CD8-positive, alpha-beta T cell (primary cell): ENCODE measurements at regions of chr17 and their contacts with region 1.

Region 1: GRCh38 chr17:76523084-76524037 is 14.1 kb downstream of the CYGB start:
- DNase-seq: peak; percentile 64 to 93 (median 81)
- ATAC-seq: peak; percentile 79
- H3K4me3 ChIP-seq: no peak overlapping the region
- H3K4me3 Mint-ChIP-seq: peak overlapping the region; percentile 43
- H3K27ac ChIP-seq: no peak overlapping the region
- H3K27ac Mint-ChIP-seq: peak overlapping the region; percentile 84
- H3K4me1 ChIP-seq: peaks cover 23% of the 10 kb centered on the region
- H3K4me1 Mint-ChIP-seq: peaks cover 25% of the 10 kb centered on the region
- H3K27me3 ChIP-seq: no peaks in the 10 kb centered on the region
- H3K27me3 Mint-ChIP-seq: no peaks in the 10 kb centered on the region
- CTCF ChIP-seq: peak; percentile 99

Region 2: DNA sequence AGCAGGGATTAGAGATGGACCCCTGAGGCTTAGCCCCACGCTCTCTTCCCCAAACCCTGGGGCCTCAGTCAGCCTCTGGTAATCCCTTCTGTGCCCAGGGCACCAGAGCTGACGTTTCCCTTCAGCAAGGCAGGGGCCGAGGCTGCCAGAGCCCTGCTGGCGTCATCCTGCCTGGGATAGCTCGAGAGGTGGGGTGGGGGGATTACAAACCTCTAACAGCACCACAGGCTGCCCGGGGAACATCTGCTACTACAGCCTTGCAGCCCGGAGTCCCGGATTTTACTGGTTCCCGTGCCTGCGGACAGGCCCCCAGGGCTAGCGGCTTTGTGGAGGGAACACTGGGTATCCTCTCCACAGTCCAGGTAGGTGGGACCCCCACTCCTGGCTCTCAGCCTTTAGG is 56.0 kb before region 1 on chr17 and contains the start of gene AANAT:
- CTCF ChIA-PET with region 1: interaction called, 14 read pairs
- POLR2A ChIA-PET with region 1: interaction called, 3 read pairs
- intact Hi-C with region 1: no loop called
- DNase-seq: no peak
- ATAC-seq: no peak
- H3K4me3 ChIP-seq: no peak within 1 kb of the TSS
- H3K4me3 Mint-ChIP-seq: no peak within 1 kb of the TSS
- H3K27ac ChIP-seq: no peak within 1 kb of the TSS
- H3K27ac Mint-ChIP-seq: no peak within 1 kb of the TSS
- H3K4me1 ChIP-seq: peaks cover 3% of the 10 kb centered on the region
- H3K4me1 Mint-ChIP-seq: peaks cover 4% of the 10 kb centered on the region
- H3K27me3 ChIP-seq: no peaks in the 10 kb centered on the region
- H3K27me3 Mint-ChIP-seq: no peaks in the 10 kb centered on the region
- CTCF ChIP-seq: no peak
- total RNA-seq, gene AANAT: not detected

Region 3: GRCh38 chr17:76540381-76541300 is 17.3 kb after region 1 on chr17:
- CTCF ChIA-PET with region 1: interaction called, 176 read pairs
- POLR2A ChIA-PET with region 1: interaction called, 4 read pairs
- intact Hi-C with region 1: no loop called
- DNase-seq: peak in 1 of 9 experiments; percentile 52
- ATAC-seq: peak; percentile 40
- H3K4me3 ChIP-seq: no peak overlapping the region
- H3K4me3 Mint-ChIP-seq: no peak overlapping the region
- H3K27ac ChIP-seq: no peak overlapping the region
- H3K27ac Mint-ChIP-seq: no peak overlapping the region
- H3K4me1 ChIP-seq: peaks cover 17% of the 10 kb centered on the region
- H3K4me1 Mint-ChIP-seq: peaks cover 11% of the 10 kb centered on the region
- H3K27me3 ChIP-seq: peaks cover 3 to 13% of the 10 kb centered on the region in 2 experiments
- H3K27me3 Mint-ChIP-seq: peaks cover 29% of the 10 kb centered on the region
- CTCF ChIP-seq: no peak

Region 4: GRCh38 chr17:76557368-76558197 is 34.2 kb after region 1 on chr17:
- CTCF ChIA-PET with region 1: interaction called, 83 read pairs
- POLR2A ChIA-PET with region 1: interaction called, 5 read pairs
- intact Hi-C with region 1: loop called in 1 of 2 experiments (anchors 2 kb)
- DNase-seq: peak; percentile 86 to 97 (median 92)
- ATAC-seq: peak; percentile 78
- H3K4me3 ChIP-seq: peak overlapping the region; percentile 70 to 75
- H3K4me3 Mint-ChIP-seq: peak overlapping the region; percentile 95
- H3K27ac ChIP-seq: peak overlapping the region; percentile 81 to 95
- H3K27ac Mint-ChIP-seq: peak overlapping the region; percentile 97
- H3K4me1 ChIP-seq: peaks cover 49% of the 10 kb centered on the region
- H3K4me1 Mint-ChIP-seq: peaks cover 63% of the 10 kb centered on the region
- H3K27me3 ChIP-seq: no peaks in the 10 kb centered on the region
- H3K27me3 Mint-ChIP-seq: no peaks in the 10 kb centered on the region
- CTCF ChIP-seq: peak; percentile 35

Region 5: DNA sequence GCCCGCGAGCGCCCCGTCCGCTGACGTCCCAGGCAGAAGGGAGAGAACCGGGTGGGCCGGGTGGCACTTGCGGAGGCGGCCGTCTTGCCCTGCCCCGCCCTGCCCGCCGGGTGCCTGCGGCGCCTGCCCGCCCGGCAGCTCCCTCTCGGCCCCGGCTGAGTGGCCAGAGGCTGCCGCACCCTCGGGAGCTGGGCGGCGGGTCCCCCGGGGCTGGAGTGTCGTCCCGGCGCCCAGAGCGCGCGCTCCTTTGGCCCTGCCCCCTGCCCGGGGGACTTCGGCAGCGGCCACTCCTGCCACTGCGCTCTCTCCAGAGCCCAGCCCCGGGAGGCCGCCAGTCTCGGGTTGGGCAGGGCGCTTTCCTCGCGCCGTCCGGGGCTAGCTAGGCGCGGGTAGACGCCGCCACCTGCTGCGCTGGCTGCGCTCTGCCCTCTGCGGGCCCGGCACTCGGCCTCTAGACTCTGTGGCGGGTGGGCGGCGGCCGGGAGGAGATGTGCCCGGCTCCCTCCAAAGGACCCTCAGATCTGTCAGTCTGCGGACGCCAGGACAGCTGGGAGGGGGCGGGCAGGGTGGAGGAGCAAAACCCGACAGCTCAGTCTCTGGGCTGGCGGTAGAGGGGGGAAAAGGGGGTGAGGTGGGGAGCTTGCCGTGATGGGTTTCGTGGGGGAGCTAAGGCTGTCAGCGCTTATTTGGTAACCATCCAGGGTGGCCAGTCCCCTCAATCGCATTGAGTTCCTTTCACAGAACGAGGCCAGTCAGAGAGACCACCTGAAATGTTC is 62.6 kb after region 1 on chr17 and contains the start of gene ST6GALNAC2:
- CTCF ChIA-PET with region 1: interaction called, 10 read pairs
- POLR2A ChIA-PET with region 1: no interaction called
- intact Hi-C with region 1: loop called (anchors 1 kb)
- DNase-seq: peak in 8 of 9 experiments; percentile 6 to 76 (median 44)
- ATAC-seq: peak; percentile 75
- H3K4me3 ChIP-seq: peak within 1 kb of the TSS; percentile 43 to 50
- H3K4me3 Mint-ChIP-seq: peak within 1 kb of the TSS; percentile 76
- H3K27ac ChIP-seq: no peak within 1 kb of the TSS
- H3K27ac Mint-ChIP-seq: no peak within 1 kb of the TSS
- H3K4me1 ChIP-seq: peaks cover 12% of the 10 kb centered on the region
- H3K4me1 Mint-ChIP-seq: peaks cover 11% of the 10 kb centered on the region
- H3K27me3 ChIP-seq: peaks cover 13 to 17% of the 10 kb centered on the region in 2 experiments
- H3K27me3 Mint-ChIP-seq: peaks cover 52% of the 10 kb centered on the region
- CTCF ChIP-seq: no peak
- total RNA-seq, gene ST6GALNAC2: 0.50 to 1.7 TPM

Region 6: DNA sequence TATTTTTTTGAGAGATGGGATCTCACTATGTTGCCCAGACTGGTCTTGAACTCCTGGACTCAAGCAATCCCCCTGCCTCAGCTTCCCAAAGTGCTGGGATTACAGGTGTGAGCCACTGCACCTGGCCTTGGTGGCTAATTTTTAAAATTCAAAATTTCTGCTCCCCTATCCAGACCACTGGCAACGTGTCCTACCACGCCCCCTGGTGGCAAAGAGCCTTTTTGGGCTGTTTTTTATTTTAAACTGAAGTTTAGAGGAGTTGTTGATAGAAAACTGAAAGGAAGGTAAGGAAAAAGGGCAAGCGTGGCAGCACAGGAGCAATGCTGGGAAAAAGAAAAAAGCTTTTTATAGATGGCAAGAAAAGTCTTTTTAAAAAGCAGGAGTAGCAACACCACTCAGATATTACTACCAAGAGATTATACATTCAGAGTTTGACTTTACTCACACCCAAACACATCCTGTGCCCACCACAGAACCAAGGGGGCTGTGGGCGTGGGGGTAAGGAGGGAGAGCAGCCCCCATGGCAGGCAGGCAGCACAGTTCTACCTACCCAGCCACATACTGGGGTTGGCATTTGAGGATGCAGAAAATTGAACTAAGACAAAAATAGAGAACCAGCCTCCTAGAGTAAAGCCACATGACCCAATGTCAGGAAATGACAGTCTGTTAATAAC is 191.6 kb after region 1 on chr17:
- CTCF ChIA-PET with region 1: interaction called, 32 read pairs
- POLR2A ChIA-PET with region 1: no interaction called
- intact Hi-C with region 1: no loop called
- DNase-seq: peak; percentile 57 to 88 (median 76)
- ATAC-seq: peak; percentile 5
- H3K4me3 ChIP-seq: peak overlapping the region in 1 of 2 experiments; percentile 4
- H3K4me3 Mint-ChIP-seq: peak overlapping the region; percentile 55
- H3K27ac ChIP-seq: peak overlapping the region; percentile 71 to 83
- H3K27ac Mint-ChIP-seq: peak overlapping the region; percentile 97
- H3K4me1 ChIP-seq: peaks cover 54% of the 10 kb centered on the region
- H3K4me1 Mint-ChIP-seq: peaks cover 57% of the 10 kb centered on the region
- H3K27me3 ChIP-seq: no peaks in the 10 kb centered on the region
- H3K27me3 Mint-ChIP-seq: no peaks in the 10 kb centered on the region
- CTCF ChIP-seq: peak; percentile 95